HCT116 (cell line): ENCODE measurements at regions of chr14 and their contacts with region 1.

Region 1: DNA sequence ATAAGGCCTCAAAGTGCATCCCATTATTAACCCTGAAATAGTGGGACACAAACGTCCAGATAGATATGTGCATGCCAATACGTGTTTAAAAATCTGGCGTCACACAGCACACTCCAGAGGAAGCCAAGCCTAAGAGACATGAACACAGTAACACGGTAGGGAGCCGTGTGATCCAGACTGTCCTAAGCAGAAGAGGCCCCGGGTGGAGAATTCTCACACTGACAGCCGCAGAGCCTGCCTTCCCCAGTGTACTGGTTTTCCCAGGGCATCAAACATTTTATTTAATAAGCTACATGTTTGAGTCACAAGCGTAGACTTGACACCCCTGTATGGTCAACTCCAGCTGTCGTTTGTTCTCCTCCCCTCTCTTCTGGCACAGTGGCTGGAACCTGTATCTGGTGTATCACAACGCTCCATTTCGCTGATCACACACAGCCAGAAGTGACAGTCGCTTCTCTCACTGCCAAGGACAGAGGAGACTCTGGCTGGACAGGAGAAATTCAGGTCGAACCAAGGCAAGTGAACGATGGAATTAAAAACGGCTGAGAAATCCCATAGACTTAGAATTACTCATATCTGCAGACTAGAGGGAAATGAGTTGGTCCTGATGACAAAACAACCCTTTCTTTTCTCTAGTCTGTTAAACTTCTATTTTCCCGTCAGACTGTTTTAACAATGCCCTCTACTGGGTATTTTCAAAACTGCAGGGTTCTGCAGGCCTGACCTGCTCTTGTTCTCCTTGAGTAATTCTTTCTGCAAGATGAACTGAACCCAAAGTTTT is 359.9 kb downstream of the RGS6 start:
- DNase-seq: peak; percentile 15
- ATAC-seq: peak; percentile 72
- H3K4me3 ChIP-seq: no peak overlapping the region
- H3K27ac ChIP-seq: no peak overlapping the region
- H3K4me1 ChIP-seq: no peaks in the 10 kb centered on the region
- H3K27me3 ChIP-seq: 0 out of 2 replicates have a peak, but pooled peaks cover 3% of the 10 kb centered on the region
- CTCF ChIP-seq: peak; percentile 54 to 86 (median 72); a peak in 5 of 6 replicates
- POLR2A ChIP-seq: no peak
- RAD21 ChIP-seq: peak; percentile 78

Region 2: GRCh38 chr14:71720978-71721624 is 571.0 kb before region 1 on chr14:
- CTCF ChIA-PET with region 1: interaction called, 3 read pairs
- POLR2A ChIA-PET with region 1: no interaction called
- RAD21 ChIA-PET with region 1: no interaction called
- intact Hi-C with region 1: loop called (anchors 2 kb)
- DNase-seq: peak; percentile 57
- ATAC-seq: peak; percentile 94
- H3K4me3 ChIP-seq: no peak overlapping the region
- H3K27ac ChIP-seq: no peak overlapping the region
- H3K4me1 ChIP-seq: no peaks in the 10 kb centered on the region
- H3K27me3 ChIP-seq: no peaks in the 10 kb centered on the region
- CTCF ChIP-seq: peak; percentile 48 to 80 (median 79); a peak in 5 of 6 replicates
- POLR2A ChIP-seq: no peak
- RAD21 ChIP-seq: peak; percentile 81

Region 3: DNA sequence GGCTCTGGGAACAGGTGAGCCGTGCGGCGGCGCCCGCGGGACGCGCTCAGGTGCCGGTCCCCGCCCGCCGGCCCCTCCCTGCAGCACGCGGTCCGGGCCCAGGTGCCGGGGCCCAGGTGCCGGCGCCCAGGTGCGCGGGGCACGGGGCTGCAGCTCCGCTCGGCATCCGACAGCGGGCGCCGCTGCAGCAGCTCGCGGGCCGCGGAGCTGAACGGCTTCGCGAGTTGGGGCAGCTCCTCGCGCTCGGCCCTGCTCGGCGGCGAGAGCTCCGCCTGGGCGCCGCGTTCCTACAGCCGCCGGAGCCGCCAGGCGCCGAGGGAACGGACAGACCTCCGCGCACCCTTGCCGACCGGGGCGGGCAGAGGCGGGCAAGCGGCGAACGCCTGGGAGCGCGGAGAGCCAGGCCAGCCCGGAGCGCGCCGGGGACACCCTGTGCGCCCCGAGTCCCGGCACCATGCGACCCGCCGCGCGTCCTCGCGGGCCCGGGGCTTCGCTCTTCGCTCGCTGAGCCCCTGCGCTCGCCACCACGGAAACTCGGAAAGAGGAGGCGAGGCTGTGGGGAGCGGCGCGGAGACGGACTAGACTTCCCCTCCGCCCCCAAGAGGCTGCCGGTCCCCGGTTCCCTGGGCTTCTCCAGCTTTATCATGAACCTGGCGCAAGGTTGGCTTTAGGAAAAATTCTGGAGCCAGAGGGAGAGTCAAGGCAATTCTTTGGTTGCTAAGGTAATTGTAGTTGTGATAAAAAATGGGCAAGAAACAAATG is 359.7 kb before region 1 on chr14 and contains the start of gene RGS6:
- CTCF ChIA-PET with region 1: no interaction called
- POLR2A ChIA-PET with region 1: no interaction called
- RAD21 ChIA-PET with region 1: no interaction called
- intact Hi-C with region 1: loop called (anchors 1 kb)
- DNase-seq: peak; percentile 43
- ATAC-seq: peak; percentile 97
- H3K4me3 ChIP-seq: peak within 1 kb of the TSS; percentile 23 to 41
- H3K27ac ChIP-seq: no peak within 1 kb of the TSS
- H3K4me1 ChIP-seq: peaks cover 5 to 14% of the 10 kb centered on the region in 2 experiments
- H3K27me3 ChIP-seq: no peaks in the 10 kb centered on the region
- CTCF ChIP-seq: peak in 1 of 3 experiments; percentile 29; a peak in 2 of 6 replicates
- POLR2A ChIP-seq: no peak
- RAD21 ChIP-seq: no peak
- total RNA-seq, gene RGS6: 4.7 TPM

Region 4: DNA sequence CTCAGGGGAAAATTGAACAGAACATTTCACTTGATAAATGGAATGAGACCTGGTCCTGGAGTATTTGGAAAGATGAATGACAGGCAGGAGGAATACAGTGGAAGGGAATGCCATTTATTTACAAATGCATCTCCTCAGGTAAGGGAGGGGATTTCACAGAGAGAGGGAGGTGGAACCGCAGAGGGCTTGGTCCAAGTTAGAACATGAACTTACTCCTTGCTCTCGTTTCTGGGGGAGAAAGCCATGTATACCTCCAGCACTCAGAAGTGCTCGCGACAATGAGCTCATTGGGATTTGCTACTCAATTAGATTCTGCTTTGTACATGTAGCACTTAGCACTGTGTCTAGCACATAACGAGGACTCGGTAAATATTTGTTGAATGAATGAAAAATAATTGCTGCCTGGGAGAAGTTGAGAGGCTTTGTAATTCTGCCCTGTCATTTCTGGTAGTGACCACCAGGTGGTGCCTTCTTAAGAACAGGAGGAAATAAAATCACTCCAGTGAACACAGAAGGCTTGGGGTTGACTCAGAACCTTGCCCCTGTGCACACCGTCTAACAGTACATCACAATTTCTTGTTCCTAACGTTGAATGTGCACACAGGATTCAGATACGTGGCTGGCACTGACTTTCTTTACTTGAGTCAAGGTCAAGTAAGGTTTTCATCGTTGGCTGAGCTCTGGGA is 268.2 kb before region 1 on chr14:
- CTCF ChIA-PET with region 1: interaction called, 7 read pairs
- POLR2A ChIA-PET with region 1: no interaction called
- RAD21 ChIA-PET with region 1: no interaction called
- intact Hi-C with region 1: loop called (anchors 2 kb)
- DNase-seq: peak; percentile 65
- ATAC-seq: peak; percentile 72
- H3K4me3 ChIP-seq: peak overlapping the region; percentile 4 to 53; a peak in 3 of 4 replicates
- H3K27ac ChIP-seq: peak overlapping the region; percentile 69
- H3K4me1 ChIP-seq: peaks cover 23 to 26% of the 10 kb centered on the region in 2 experiments
- H3K27me3 ChIP-seq: no peaks in the 10 kb centered on the region
- CTCF ChIP-seq: peak; percentile 42 to 84 (median 73); a peak in 5 of 6 replicates
- POLR2A ChIP-seq: no peak
- RAD21 ChIP-seq: peak; percentile 64